K562 (cell line): ENCODE measurements at regions of chr22 and their contacts with region 1.

Region 1: DNA sequence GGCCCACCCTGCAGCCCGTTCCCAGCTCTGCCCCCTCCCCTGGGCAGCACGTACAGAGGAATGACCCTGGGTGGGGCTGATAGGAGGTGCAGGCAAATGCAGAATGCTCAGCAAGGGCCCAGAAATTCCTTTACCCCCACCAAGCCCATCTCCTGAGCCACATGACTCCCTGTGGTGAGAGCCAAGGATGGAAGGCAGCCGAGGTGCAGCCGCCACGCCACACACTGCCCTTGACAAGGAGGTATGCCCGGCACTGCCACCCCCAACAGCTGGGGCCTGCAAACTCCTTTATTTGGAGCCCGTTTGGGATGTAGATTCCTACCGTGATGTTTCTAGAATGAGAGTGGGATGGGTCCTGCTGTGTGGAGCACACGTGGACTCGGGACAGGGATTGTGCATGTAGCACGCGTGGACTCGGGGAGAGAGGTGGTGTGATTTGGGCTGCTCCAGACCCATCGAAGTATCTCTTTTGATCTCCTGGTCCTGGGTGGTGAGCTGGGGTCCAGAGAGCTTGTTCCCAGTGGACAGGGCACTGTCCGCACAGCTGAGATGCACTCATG is 12.9 kb downstream of the GTSE1 start:
- DNase-seq: no peak
- ATAC-seq: no peak
- H3K4me3 ChIP-seq: no peak overlapping the region
- H3K27ac ChIP-seq: no peak overlapping the region
- H3K4me1 ChIP-seq: peaks cover 7 to 8% of the 10 kb centered on the region in 2 experiments; a peak in 3 of 5 replicates
- H3K27me3 ChIP-seq: no peaks in the 10 kb centered on the region
- CTCF ChIP-seq: no peak
- EP300 ChIP-seq: no peak
- POLR2A ChIP-seq: no peak
- RAD21 ChIP-seq: no peak

Region 2: GRCh38 chr22:46139895-46140350 is 169.7 kb before region 1 on chr22:
- CTCF ChIA-PET with region 1: no interaction called
- POLR2A ChIA-PET with region 1: no interaction called
- in situ Hi-C with region 1: no loop called
- intact Hi-C with region 1: loop called (anchors 5 kb)
- DNase-seq: no peak
- ATAC-seq: no peak
- H3K4me3 ChIP-seq: no peak overlapping the region
- H3K27ac ChIP-seq: no peak overlapping the region
- H3K4me1 ChIP-seq: peaks cover 0 to 14% of the 10 kb centered on the region in 2 experiments; a peak in 2 of 5 replicates
- H3K27me3 ChIP-seq: peaks cover 0 to 12% of the 10 kb centered on the region in 2 experiments; a peak in 2 of 5 replicates
- CTCF ChIP-seq: no peak
- EP300 ChIP-seq: no peak
- POLR2A ChIP-seq: no peak
- RAD21 ChIP-seq: no peak

Region 3: GRCh38 chr22:46213052-46213451 is 96.6 kb before region 1 on chr22:
- CTCF ChIA-PET with region 1: no interaction called
- POLR2A ChIA-PET with region 1: no interaction called
- in situ Hi-C with region 1: no loop called
- intact Hi-C with region 1: no loop called
- DNase-seq: no peak
- ATAC-seq: no peak
- H3K4me3 ChIP-seq: no peak overlapping the region
- H3K27ac ChIP-seq: no peak overlapping the region
- H3K4me1 ChIP-seq: no peaks in the 10 kb centered on the region
- H3K27me3 ChIP-seq: no peaks in the 10 kb centered on the region
- CTCF ChIP-seq: no peak
- EP300 ChIP-seq: no peak
- POLR2A ChIP-seq: no peak
- RAD21 ChIP-seq: no peak

Region 4: DNA sequence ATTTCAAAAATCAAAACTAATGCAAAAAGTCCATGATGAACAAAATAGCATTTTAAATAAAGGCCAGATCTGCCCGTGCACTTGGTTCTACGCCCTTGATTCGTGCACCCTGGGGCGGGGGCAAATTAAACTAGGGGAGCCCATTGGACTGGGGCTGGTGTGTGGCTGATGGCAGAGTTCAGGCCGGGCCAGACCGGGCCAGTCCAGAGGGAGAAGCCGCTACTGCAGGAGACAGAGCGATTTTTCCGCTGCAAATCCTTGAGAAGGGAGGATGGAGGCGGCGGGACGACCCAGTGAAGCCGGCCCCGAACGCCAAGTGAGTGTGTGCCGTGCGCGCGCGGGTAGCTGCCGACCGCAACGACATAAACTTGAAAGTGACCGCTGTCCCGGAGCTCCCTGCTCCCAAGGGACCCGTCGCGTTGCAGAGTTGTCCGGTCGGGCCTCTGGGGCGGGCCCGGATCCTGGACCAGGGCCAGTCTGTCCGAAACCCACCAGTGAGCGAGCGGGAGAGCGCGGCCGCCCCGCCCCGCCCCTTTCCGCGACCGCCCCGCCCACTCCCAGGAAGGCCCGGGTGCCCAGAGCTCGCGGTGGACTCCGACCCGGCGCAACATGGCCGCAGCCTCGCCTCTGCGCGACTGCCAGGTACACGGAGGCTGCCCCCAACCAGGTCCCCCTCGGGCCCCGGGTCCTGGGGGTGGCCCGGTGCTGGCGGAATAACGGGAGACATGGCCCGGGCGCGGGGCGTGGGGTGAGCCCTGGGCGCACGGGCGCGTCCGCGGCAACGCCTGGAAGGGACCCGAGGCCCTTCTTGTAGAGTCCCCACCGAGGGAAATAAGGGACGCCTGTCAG is 42.0 kb before region 1 on chr22 and contains the start of gene TTC38:
- CTCF ChIA-PET with region 1: no interaction called
- POLR2A ChIA-PET with region 1: no interaction called
- in situ Hi-C with region 1: no loop called
- intact Hi-C with region 1: no loop called
- DNase-seq: peak; percentile 89 to 93 (median 91)
- ATAC-seq: peak; percentile 98
- H3K4me3 ChIP-seq: peak within 1 kb of the TSS; percentile 90
- H3K27ac ChIP-seq: peak within 1 kb of the TSS; percentile 69
- H3K4me1 ChIP-seq: peaks cover 0 to 24% of the 10 kb centered on the region in 2 experiments; a peak in 4 of 5 replicates
- H3K27me3 ChIP-seq: no peaks in the 10 kb centered on the region
- CTCF ChIP-seq: no peak
- EP300 ChIP-seq: no peak
- POLR2A ChIP-seq: peak; percentile 75
- RAD21 ChIP-seq: no peak
- polyA plus RNA-seq, gene TTC38: 0.84 to 2.5 TPM

Region 5: DNA sequence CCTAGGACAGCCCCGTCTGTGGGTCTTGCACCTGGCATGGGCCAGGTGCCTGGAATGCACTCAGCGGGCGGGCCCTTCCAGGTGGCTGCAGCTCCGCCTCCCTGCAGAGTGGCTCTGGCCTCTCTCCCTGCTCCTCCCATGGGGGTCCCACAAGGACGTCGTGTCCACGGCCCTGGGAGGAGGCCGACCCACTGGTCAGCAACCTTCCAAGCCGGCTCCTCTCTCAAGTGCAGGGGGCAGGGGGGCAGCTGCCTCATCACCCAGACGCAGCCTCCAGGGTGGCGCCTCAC is 386.6 kb after region 1 on chr22:
- CTCF ChIA-PET with region 1: no interaction called
- POLR2A ChIA-PET with region 1: no interaction called
- in situ Hi-C with region 1: no loop called
- intact Hi-C with region 1: no loop called
- DNase-seq: no peak
- ATAC-seq: no peak
- H3K4me3 ChIP-seq: no peak overlapping the region
- H3K27ac ChIP-seq: no peak overlapping the region
- H3K4me1 ChIP-seq: no peaks in the 10 kb centered on the region
- H3K27me3 ChIP-seq: no peaks in the 10 kb centered on the region
- CTCF ChIP-seq: no peak
- EP300 ChIP-seq: no peak
- POLR2A ChIP-seq: no peak
- RAD21 ChIP-seq: no peak

Region 6: DNA sequence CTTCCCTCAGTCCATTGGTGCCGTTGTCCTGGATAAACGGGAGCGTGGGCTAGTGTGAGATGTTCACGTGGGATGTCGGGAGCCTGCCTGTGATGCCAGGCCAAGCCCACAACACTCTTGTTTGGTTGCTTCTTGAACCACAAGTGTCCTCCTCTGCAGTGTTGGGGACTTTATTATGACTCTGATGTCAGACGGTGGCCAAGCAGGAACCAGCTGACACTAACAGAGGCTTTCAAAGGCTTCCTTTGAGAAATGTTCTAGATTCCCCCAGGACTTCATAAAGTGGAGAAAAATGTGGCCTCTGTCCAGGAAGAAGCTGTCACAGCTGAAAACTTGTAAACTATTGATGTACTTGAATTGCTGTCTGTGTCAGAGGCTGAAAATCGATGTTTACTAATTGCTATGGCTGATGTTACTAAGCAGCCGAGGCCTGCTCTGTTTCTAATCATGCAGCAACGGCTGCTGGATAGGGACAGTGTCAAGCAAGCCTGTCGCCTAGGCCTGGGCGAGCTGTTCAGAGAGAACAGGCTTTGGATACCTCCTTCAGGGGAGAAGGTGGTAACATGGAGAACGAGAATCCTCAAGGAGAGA is 584.6 kb after region 1 on chr22:
- CTCF ChIA-PET with region 1: no interaction called
- POLR2A ChIA-PET with region 1: no interaction called
- in situ Hi-C with region 1: no loop called
- intact Hi-C with region 1: no loop called
- DNase-seq: no peak
- ATAC-seq: no peak
- H3K4me3 ChIP-seq: no peak overlapping the region
- H3K27ac ChIP-seq: no peak overlapping the region
- H3K4me1 ChIP-seq: peaks cover 14% of the 10 kb centered on the region in 2 experiments; a peak in 4 of 5 replicates
- H3K27me3 ChIP-seq: no peaks in the 10 kb centered on the region
- CTCF ChIP-seq: no peak
- EP300 ChIP-seq: no peak
- POLR2A ChIP-seq: no peak
- RAD21 ChIP-seq: no peak